Right cardiac atrium (tissue), 5 donors: ENCODE measurements at regions of chr13 and their contacts with region 1.

Region 1: GRCh38 chr13:110421696-110422385 is 114.8 kb downstream of the COL4A2 start:
- DNase-seq: no peak
- ATAC-seq: no peak
- H3K4me3 ChIP-seq: no peak overlapping the region
- H3K27ac ChIP-seq: no peak overlapping the region
- H3K4me1 ChIP-seq: peaks cover 15% of the 10 kb centered on the region
- H3K27me3 ChIP-seq: no peaks in the 10 kb centered on the region

Region 2: DNA sequence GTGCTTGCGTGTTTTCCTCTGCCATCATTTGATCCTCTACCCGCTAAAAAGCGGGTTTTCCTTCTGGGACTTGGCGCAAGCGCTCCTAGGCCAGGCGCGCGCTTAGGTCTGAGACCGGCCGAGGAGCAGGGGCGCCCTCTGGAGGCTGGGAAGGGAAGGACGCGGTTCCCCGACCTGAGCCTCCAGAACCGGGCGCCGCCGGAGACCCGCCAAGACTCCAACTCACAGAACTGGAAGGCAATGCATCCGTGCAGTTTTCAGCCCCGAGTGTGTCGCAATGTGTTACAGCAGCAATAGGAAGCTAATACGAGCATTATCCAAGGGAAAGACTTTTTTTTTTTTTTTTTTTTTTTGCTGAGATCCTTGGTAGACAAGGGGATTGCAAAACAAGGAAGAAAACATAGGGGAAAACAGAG is 305.8 kb before region 1 on chr13:
- intact Hi-C with region 1: no loop called
- DNase-seq: peak; percentile 53 to 85 (median 82)
- ATAC-seq: peak; percentile 65 to 76
- H3K4me3 ChIP-seq: no peak overlapping the region
- H3K27ac ChIP-seq: no peak overlapping the region
- H3K4me1 ChIP-seq: no peaks in the 10 kb centered on the region
- H3K27me3 ChIP-seq: no peaks in the 10 kb centered on the region

Region 3: DNA sequence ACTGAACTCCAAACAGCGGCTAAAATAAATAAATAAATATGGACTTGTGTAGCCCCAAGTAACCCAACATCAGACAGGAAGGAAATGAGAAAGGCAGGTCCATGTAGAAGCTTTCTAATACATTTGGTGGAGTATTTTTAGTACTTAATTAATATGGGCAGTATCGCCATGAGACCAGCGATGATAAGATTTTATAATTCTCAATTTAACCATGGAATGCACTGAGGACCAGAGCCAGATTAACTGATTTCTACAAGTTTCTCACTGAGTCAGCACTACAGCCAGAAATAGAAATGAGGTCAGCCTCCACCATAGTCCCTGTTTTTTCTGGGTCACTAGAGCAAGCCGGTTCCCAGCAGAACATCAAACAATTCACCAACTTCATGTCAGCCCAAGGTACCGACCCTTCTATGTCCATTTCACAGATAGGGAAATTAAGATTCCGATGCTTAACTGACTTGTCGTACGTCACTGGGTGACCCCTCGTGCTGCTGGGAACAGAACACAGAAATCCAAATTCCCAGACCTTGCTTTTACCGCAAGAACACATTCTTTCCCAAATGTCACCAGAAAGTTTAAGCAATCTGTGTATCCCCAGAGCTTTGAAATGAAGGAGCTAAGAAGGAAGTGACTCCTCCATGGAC is 205.3 kb before region 1 on chr13:
- intact Hi-C with region 1: loop called in 1 of 4 experiments (anchors 5 kb)
- DNase-seq: peak in 1 of 3 donors; percentile 64
- ATAC-seq: peak; percentile 71 to 81
- H3K4me3 ChIP-seq: no peak overlapping the region
- H3K27ac ChIP-seq: peak overlapping the region; percentile 73
- H3K4me1 ChIP-seq: peaks cover 23% of the 10 kb centered on the region
- H3K27me3 ChIP-seq: no peaks in the 10 kb centered on the region

Region 4: DNA sequence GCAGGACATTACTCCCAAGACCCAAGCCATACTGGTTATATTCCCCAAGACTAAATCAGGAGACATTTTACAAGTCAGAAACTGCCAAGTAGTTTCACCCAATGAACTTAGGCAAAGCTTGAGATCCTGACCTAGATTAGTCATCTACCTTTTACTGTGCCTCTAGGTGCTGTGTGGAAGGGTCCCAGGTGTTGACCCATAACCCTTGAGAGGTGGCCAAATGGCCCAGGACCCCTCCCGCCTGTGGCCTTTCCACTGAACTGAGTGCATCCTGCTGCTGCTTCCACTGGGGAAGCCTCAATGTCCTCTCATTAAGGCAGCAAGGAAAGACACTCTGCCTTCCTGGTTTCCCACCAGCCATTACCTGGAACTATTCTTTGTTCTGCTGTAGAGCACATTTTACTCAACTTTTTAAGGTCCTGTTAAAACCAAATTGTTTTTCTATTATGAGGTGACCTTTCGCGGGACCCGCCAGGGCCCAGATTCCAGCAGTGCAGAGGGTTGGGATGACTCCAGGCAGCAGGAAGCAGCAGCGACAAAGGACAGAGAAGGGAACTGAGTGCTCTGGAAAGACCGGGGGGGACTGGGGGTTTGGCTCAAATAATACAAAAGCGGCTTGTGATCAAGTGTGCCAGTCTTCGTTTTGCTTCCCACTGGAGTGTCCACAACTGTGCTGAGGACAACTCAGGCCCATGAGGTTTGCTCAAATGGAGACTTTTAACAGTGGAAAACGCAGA is 465.9 kb after region 1 on chr13:
- intact Hi-C with region 1: no loop called
- DNase-seq: peak in 1 of 3 donors; percentile 67
- ATAC-seq: peak; percentile 65 to 80
- H3K4me3 ChIP-seq: no peak overlapping the region
- H3K27ac ChIP-seq: peak overlapping the region; percentile 48
- H3K4me1 ChIP-seq: peaks cover 6% of the 10 kb centered on the region
- H3K27me3 ChIP-seq: no peaks in the 10 kb centered on the region